ENCODE measurements at regions of chr14 and their contacts with region 1.

Region 1: GRCh38 chr14:103292426-103293374 is 41.3 kb upstream of the EIF5 start:
- DNase-seq: peak in 2 of 3 donors; percentile 86 to 89
- ATAC-seq: peak; percentile 94
- H3K4me3 ChIP-seq: no peak overlapping the region
- H3K4me1 ChIP-seq: no peaks in the 10 kb centered on the region
- CTCF ChIP-seq: peak; percentile 88

Region 2: GRCh38 chr14:103084021-103084919 is 208.4 kb before region 1 on chr14 and contains the start of gene LBHD2:
- intact Hi-C with region 1: loop called in 1 of 2 experiments (anchors 5 kb)
- DNase-seq: peak in 1 of 3 donors; percentile 47
- ATAC-seq: peak; percentile 44
- H3K4me3 ChIP-seq: no peak within 1 kb of the TSS
- H3K4me1 ChIP-seq: peaks cover 3% of the 10 kb centered on the region
- CTCF ChIP-seq: no peak
- total RNA-seq, gene LBHD2: not detected

Region 3: GRCh38 chr14:103104654-103105452 is 187.8 kb before region 1 on chr14:
- intact Hi-C with region 1: loop called in 1 of 2 experiments (anchors 5 kb)
- DNase-seq: peak in 2 of 3 donors; percentile 83 to 87
- ATAC-seq: peak; percentile 83
- H3K4me3 ChIP-seq: no peak overlapping the region
- H3K4me1 ChIP-seq: peaks cover 18% of the 10 kb centered on the region
- CTCF ChIP-seq: peak; percentile 97

Region 4: DNA sequence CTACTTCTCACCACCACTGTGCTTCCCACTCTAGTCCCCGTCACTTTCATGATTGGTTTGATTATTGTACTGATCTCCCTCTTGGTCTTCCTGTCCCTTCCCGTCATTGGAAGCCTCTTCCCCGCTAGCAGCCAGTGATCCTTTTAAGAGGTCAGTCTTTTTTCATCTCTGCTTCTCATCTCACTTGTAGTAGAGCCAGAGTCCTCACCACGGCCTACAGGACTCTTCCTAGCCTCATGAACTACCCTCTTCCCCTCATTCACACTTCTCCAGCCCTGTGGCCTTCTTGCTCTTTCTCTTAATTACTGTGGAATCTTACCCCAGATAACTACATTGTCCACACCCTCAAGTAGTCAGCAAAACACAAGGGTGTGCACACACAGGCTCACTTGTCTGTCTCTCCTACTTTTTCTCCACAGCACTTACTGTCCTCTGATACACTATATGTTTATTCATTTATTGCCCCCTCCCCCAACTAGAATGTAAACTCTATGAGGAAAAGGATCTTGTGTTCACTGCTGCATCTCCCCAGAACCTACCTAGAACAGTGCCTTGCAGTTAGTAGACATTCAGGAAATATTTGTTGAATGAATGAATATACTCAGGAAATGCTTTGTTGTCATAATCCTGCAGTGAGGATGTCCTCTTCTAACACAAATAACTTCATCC is 163.6 kb after region 1 on chr14:
- intact Hi-C with region 1: no loop called
- DNase-seq: no peak
- ATAC-seq: peak; percentile 55
- H3K4me3 ChIP-seq: no peak overlapping the region
- H3K4me1 ChIP-seq: no peaks in the 10 kb centered on the region
- CTCF ChIP-seq: no peak